ENCODE measurements at regions of chr13 and their contacts with region 1.

Region 1: DNA sequence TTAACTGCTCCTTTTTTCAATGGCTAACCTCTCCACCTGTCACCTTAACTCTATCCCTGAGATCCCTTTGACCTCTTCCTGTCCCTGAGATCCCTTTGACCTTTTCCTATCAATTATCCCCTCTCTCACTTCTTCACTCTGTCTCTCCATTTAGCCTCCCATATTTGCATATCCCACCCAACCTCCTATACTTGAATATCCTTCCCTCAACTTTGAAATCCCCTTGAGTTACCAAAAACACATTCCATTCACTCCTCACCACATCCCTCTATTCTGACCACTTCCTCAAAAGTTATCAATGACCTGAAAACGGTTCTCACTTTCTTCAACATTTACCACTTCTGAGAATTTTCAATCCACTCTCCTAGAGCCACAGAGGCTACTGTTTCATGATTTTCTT is 3.0 kb downstream of the MYCBP2 start:
- DNase-seq: no peak
- H3K4me3 Mint-ChIP-seq: peak overlapping the region; percentile 95
- H3K27ac Mint-ChIP-seq: peak overlapping the region; percentile 37
- H3K4me1 Mint-ChIP-seq: peaks cover 73% of the 10 kb centered on the region
- H3K27me3 Mint-ChIP-seq: peaks cover 2% of the 10 kb centered on the region

Region 2: DNA sequence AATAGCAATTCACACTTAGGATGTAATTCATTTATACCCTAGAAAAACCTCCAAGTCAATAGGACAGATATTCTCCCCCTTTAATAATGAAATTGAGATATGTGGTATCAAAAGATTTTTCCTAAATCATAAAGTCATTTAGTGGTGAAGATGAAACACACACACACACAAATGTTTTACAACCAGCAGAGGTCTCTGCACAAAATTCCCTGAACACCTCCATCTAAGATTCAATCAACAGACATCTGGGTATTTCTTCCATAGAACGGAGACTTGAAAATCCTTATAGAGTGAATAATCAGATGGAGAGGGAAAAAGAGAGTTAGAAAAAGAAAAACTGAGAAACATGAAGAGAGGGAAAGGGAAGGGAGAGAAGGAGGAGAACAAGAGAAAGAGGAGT is 49.7 kb before region 1 on chr13:
- intact Hi-C with region 1: loop called (anchors 5 kb)
- DNase-seq: no peak
- H3K4me3 Mint-ChIP-seq: no peak overlapping the region
- H3K27ac Mint-ChIP-seq: no peak overlapping the region
- H3K4me1 Mint-ChIP-seq: peaks cover 15% of the 10 kb centered on the region
- H3K27me3 Mint-ChIP-seq: no peaks in the 10 kb centered on the region

Measured in activated T-helper 1 cell treated with anti-CD3 and anti-CD28 coated beads, Interleukin-12 subunit alpha, Interleukin-12 subunit beta, Interleukin-2, Interleukin-4 antibody, amounts not matched to agents 30 ng/mL and 10 ng/mL and 1 ng/mL, durations not matched to agents 14 hours and 24 hours and 36 hours (primary cell).